ENCODE measurements at regions of chr5 and their contacts with region 1.

Region 1: GRCh38 chr5:154072414-154073171 is 33.8 kb downstream of the MFAP3 start:
- DNase-seq: peak; percentile 43
- ATAC-seq: peak; percentile 99
- H3K4me3 ChIP-seq: no peak overlapping the region
- H3K27ac ChIP-seq: no peak overlapping the region
- H3K4me1 ChIP-seq: no peaks in the 10 kb centered on the region
- H3K27me3 ChIP-seq: no peaks in the 10 kb centered on the region
- CTCF ChIP-seq: peak; percentile 85 to 98 (median 93)
- EP300 ChIP-seq: no peak
- POLR2A ChIP-seq: no peak
- RAD21 ChIP-seq: peak; percentile 96

Region 2: DNA sequence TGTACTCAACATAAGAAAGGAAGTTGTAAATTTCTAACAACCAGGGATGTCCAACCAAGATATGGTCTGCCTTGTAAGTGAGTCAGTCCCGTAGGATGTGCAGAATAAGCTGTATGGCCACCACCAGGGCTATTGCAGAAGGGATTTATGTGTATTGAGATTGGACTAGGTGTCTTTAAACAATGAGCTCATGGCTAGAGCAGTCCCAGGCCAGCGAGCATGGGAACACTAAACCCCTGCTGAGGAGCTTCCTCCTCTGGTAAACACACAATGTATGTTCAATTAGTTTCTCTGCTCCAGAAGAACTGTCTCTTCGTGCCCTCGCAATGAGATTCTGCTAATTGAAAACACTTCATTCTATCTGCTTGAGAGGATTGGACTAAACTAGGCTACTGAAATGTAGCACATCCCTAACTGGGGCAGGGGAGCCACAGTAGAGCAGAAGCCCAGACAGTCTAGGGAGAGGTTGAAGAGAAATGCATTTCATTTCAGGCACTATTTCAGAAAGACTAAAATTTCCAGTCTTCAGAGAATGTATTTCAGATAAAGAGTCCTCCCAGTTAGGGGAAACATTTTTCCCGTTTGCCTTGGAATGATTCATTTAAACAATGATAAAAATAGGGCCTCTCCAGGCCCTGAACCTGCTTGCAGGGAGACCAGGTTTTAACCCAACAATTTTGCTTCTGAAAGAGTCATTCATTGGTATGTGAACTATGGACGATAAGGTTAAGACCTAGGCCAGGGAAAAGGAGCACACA is 188.6 kb before region 1 on chr5:
- CTCF ChIA-PET with region 1: no interaction called
- POLR2A ChIA-PET with region 1: no interaction called
- RAD21 ChIA-PET with region 1: no interaction called
- SMC1A ChIA-PET with region 1: no interaction called
- in situ Hi-C with region 1: no loop called
- intact Hi-C with region 1: no loop called
- DNase-seq: no peak
- ATAC-seq: no peak
- H3K4me3 ChIP-seq: no peak overlapping the region
- H3K27ac ChIP-seq: no peak overlapping the region
- H3K4me1 ChIP-seq: no peaks in the 10 kb centered on the region
- H3K27me3 ChIP-seq: peaks cover 0 to 2% of the 10 kb centered on the region in 2 experiments; a peak in 1 of 4 replicates
- CTCF ChIP-seq: no peak
- EP300 ChIP-seq: no peak
- POLR2A ChIP-seq: no peak
- RAD21 ChIP-seq: no peak

Region 3: DNA sequence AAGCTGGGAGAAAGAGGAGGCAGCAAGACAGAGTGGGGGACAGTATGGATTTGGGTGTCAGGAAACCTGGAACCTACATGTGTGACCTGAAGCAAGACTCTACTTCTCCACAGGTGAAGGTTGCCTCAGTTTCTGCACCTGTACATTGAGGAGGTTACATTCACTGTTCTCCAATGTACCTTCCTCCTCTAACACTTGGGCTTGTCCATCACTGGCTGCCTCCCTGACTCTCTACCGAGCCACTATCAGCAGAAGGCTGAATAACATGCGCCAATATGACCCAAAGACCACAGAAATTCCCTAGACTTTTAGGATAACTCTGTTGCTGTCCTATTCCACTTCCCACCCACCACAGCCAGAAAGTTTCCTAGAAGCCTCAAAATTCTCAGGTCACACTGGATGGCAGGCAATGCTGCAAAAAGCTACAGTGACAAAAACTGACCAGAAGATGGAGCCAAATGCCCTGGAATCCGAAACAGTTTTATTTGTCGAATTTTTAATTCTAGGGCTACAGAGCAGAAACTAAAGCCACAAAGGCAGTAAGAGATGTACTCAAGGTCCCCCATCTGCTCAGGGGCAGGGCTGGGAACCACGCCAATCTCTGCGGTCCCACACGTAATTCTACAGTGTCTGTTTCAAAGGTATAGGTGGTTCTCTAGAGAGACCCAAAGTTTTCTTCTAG is 98.3 kb before region 1 on chr5:
- CTCF ChIA-PET with region 1: interaction called, 34 read pairs
- POLR2A ChIA-PET with region 1: no interaction called
- RAD21 ChIA-PET with region 1: interaction called, 28 read pairs
- SMC1A ChIA-PET with region 1: interaction called, 11 read pairs
- in situ Hi-C with region 1: no loop called
- intact Hi-C with region 1: loop called (anchors 2 kb)
- DNase-seq: no peak
- ATAC-seq: peak; percentile 83
- H3K4me3 ChIP-seq: no peak overlapping the region
- H3K27ac ChIP-seq: no peak overlapping the region
- H3K4me1 ChIP-seq: no peaks in the 10 kb centered on the region
- H3K27me3 ChIP-seq: peaks cover 2% of the 10 kb centered on the region in 2 experiments; a peak in 2 of 4 replicates
- CTCF ChIP-seq: peak; percentile 58 to 79 (median 75); a peak in 5 of 6 replicates
- EP300 ChIP-seq: no peak
- POLR2A ChIP-seq: no peak
- RAD21 ChIP-seq: peak; percentile 90

Region 4: DNA sequence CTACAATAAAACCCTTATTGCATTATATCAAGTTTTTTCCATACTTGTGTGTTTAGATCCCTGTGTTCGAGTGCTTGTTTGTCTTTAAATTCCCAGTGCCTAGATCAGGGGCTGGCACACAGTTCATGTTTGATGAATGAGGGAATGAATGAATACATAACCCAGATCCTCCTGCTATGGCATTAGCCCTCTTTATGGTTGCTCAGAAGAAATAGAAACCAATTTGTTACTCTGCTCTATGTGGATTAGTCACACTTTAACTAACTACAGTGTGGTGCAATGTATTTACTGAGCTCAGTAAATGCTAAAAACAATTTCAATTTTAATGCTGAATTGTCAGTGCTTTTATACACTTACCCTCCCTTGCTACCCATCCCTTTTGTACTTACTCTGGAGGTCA is 101.5 kb after region 1 on chr5:
- CTCF ChIA-PET with region 1: interaction called, 55 read pairs
- POLR2A ChIA-PET with region 1: no interaction called
- RAD21 ChIA-PET with region 1: interaction called, 7 read pairs
- SMC1A ChIA-PET with region 1: interaction called, 26 read pairs
- in situ Hi-C with region 1: no loop called
- intact Hi-C with region 1: no loop called
- DNase-seq: no peak
- ATAC-seq: no peak
- H3K4me3 ChIP-seq: no peak overlapping the region
- H3K27ac ChIP-seq: no peak overlapping the region
- H3K4me1 ChIP-seq: no peaks in the 10 kb centered on the region
- H3K27me3 ChIP-seq: no peaks in the 10 kb centered on the region; a peak in 1 of 4 replicates
- CTCF ChIP-seq: no peak
- EP300 ChIP-seq: no peak
- POLR2A ChIP-seq: no peak
- RAD21 ChIP-seq: no peak

Region 5: GRCh38 chr5:154196955-154197652 is 124.5 kb after region 1 on chr5:
- CTCF ChIA-PET with region 1: interaction called, 24 read pairs
- POLR2A ChIA-PET with region 1: no interaction called
- RAD21 ChIA-PET with region 1: interaction called, 12 read pairs
- SMC1A ChIA-PET with region 1: interaction called, 12 read pairs
- in situ Hi-C with region 1: no loop called
- intact Hi-C with region 1: no loop called
- DNase-seq: no peak
- ATAC-seq: peak; percentile 35
- H3K4me3 ChIP-seq: no peak overlapping the region
- H3K27ac ChIP-seq: no peak overlapping the region
- H3K4me1 ChIP-seq: peaks cover 32% of the 10 kb centered on the region
- H3K27me3 ChIP-seq: no peaks in the 10 kb centered on the region
- CTCF ChIP-seq: peak in 2 of 3 experiments; percentile 8 to 35; a peak in 3 of 6 replicates
- EP300 ChIP-seq: no peak
- POLR2A ChIP-seq: no peak
- RAD21 ChIP-seq: peak; percentile 28; the same call in 1 of the 2 replicates

Region 6: GRCh38 chr5:154267516-154267915 is 194.9 kb after region 1 on chr5:
- CTCF ChIA-PET with region 1: no interaction called
- POLR2A ChIA-PET with region 1: no interaction called
- RAD21 ChIA-PET with region 1: no interaction called
- SMC1A ChIA-PET with region 1: no interaction called
- in situ Hi-C with region 1: no loop called
- intact Hi-C with region 1: no loop called
- DNase-seq: no peak
- ATAC-seq: no peak
- H3K4me3 ChIP-seq: no peak overlapping the region
- H3K27ac ChIP-seq: no peak overlapping the region
- H3K4me1 ChIP-seq: peaks cover 4% of the 10 kb centered on the region; the same call in 1 of the 2 replicates
- H3K27me3 ChIP-seq: no peaks in the 10 kb centered on the region
- CTCF ChIP-seq: no peak
- EP300 ChIP-seq: no peak
- POLR2A ChIP-seq: no peak
- RAD21 ChIP-seq: no peak

Region 7: GRCh38 chr5:154421868-154422267 is 349.3 kb after region 1 on chr5:
- CTCF ChIA-PET with region 1: interaction called, 6 read pairs
- POLR2A ChIA-PET with region 1: no interaction called
- RAD21 ChIA-PET with region 1: interaction called, 12 read pairs
- SMC1A ChIA-PET with region 1: interaction called, 12 read pairs
- in situ Hi-C with region 1: no loop called
- intact Hi-C with region 1: no loop called
- DNase-seq: no peak
- ATAC-seq: peak; percentile 86
- H3K4me3 ChIP-seq: no peak overlapping the region
- H3K27ac ChIP-seq: no peak overlapping the region
- H3K4me1 ChIP-seq: peaks cover 2% of the 10 kb centered on the region; the same call in 1 of the 2 replicates
- H3K27me3 ChIP-seq: no peaks in the 10 kb centered on the region
- CTCF ChIP-seq: peak; percentile 53 to 64 (median 56)
- EP300 ChIP-seq: no peak
- POLR2A ChIP-seq: no peak
- RAD21 ChIP-seq: peak; percentile 56

Region 8: GRCh38 chr5:154610321-154611154 is 537.9 kb after region 1 on chr5:
- CTCF ChIA-PET with region 1: interaction called, 12 read pairs
- POLR2A ChIA-PET with region 1: no interaction called
- RAD21 ChIA-PET with region 1: interaction called, 4 read pairs
- SMC1A ChIA-PET with region 1: interaction called, 3 read pairs
- in situ Hi-C with region 1: loop called (anchors 10 kb)
- intact Hi-C with region 1: loop called (anchors 1 kb)
- DNase-seq: peak; percentile 27
- ATAC-seq: peak; percentile 98
- H3K4me3 ChIP-seq: peak overlapping the region; percentile 72; the same call in 1 of the 2 replicates
- H3K27ac ChIP-seq: no peak overlapping the region
- H3K4me1 ChIP-seq: peaks cover 12% of the 10 kb centered on the region
- H3K27me3 ChIP-seq: peaks cover 4 to 7% of the 10 kb centered on the region in 2 experiments; a peak in 3 of 4 replicates
- CTCF ChIP-seq: peak; percentile 91 to 99 (median 96); a peak in 5 of 6 replicates
- EP300 ChIP-seq: no peak
- POLR2A ChIP-seq: no peak
- RAD21 ChIP-seq: peak; percentile 99

Measured in GM12878 (cell line).